WTC11 (cell line): ENCODE measurements at regions of chr1 and their contacts with region 1.

Region 1: GRCh38 chr1:24847995-24848881 is 81.8 kb downstream of the RUNX3 start:
- DNase-seq: peak; percentile 97
- ATAC-seq: peak; percentile 88
- H3K4me3 Mint-ChIP-seq: peak overlapping the region; percentile 67
- H3K27ac Mint-ChIP-seq: no peak overlapping the region
- H3K4me1 Mint-ChIP-seq: 0 out of 2 replicates have a peak, but pooled peaks cover 3% of the 10 kb centered on the region
- H3K27me3 Mint-ChIP-seq: peaks cover 13% of the 10 kb centered on the region
- CTCF ChIP-seq: peak; percentile 83

Region 2: GRCh38 chr1:24793447-24794131 is 54.6 kb before region 1 on chr1:
- CTCF ChIA-PET with region 1: no interaction called
- POLR2A ChIA-PET with region 1: no interaction called
- DNase-seq: no peak
- ATAC-seq: no peak
- H3K4me3 Mint-ChIP-seq: no peak overlapping the region
- H3K27ac Mint-ChIP-seq: peak overlapping the region; percentile 4
- H3K4me1 Mint-ChIP-seq: peaks cover 17% of the 10 kb centered on the region
- H3K27me3 Mint-ChIP-seq: no peaks in the 10 kb centered on the region
- CTCF ChIP-seq: no peak

Region 3: DNA sequence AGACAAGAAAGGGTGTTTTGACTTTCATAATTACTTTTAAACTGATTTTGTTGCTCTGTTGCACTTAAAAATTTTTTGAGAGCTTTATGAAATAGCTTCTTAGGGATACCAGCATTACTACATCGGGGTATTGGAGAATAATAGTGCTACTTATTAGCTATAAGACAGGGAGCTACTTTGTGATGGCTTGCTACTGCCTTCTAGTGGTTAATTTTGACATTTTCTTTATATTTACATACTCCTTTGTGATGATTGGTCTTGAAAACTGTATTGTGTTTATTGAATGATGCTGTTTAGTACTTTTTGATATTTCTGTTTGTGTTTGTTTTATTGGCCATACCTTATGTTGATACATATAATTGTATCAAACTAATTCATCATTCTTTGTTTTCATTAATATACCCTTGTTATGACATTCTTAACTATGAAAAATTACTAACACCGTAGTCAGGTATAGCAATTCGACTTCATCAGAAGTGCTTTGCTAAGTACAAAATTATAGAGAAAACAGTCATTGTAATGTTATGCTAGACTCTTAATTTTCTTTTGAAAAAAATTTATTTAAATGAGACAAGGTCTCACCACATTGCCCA is 17.5 kb before region 1 on chr1:
- CTCF ChIA-PET with region 1: interaction called, 15 read pairs
- POLR2A ChIA-PET with region 1: no interaction called
- DNase-seq: no peak
- ATAC-seq: peak; percentile 57; the same call in 1 of the 2 replicates
- H3K4me3 Mint-ChIP-seq: no peak overlapping the region
- H3K27ac Mint-ChIP-seq: no peak overlapping the region
- H3K4me1 Mint-ChIP-seq: peaks cover 35% of the 10 kb centered on the region
- H3K27me3 Mint-ChIP-seq: no peaks in the 10 kb centered on the region
- CTCF ChIP-seq: peak; percentile 52; the same call in 1 of the 2 replicates

Region 4: GRCh38 chr1:24861821-24862727 is 13.8 kb after region 1 on chr1:
- CTCF ChIA-PET with region 1: interaction called, 31 read pairs
- POLR2A ChIA-PET with region 1: interaction called, 7 read pairs
- DNase-seq: no peak
- ATAC-seq: peak; percentile 29
- H3K4me3 Mint-ChIP-seq: no peak overlapping the region
- H3K27ac Mint-ChIP-seq: peak overlapping the region; percentile 20; the same call in 1 of the 2 replicates
- H3K4me1 Mint-ChIP-seq: peaks cover 15% of the 10 kb centered on the region
- H3K27me3 Mint-ChIP-seq: no peaks in the 10 kb centered on the region
- CTCF ChIP-seq: no peak

Region 5: GRCh38 chr1:24897767-24898483 is 49.7 kb after region 1 on chr1:
- CTCF ChIA-PET with region 1: interaction called, 46 read pairs
- POLR2A ChIA-PET with region 1: no interaction called
- DNase-seq: peak; percentile 79
- ATAC-seq: peak; percentile 93
- H3K4me3 Mint-ChIP-seq: no peak overlapping the region
- H3K27ac Mint-ChIP-seq: no peak overlapping the region
- H3K4me1 Mint-ChIP-seq: peaks cover 7% of the 10 kb centered on the region
- H3K27me3 Mint-ChIP-seq: peaks cover under 1% of the 10 kb centered on the region; the same call in 1 of the 2 replicates
- CTCF ChIP-seq: peak; percentile 71

Region 6: GRCh38 chr1:24909388-24909898 is 61.2 kb after region 1 on chr1:
- CTCF ChIA-PET with region 1: interaction called, 20 read pairs
- POLR2A ChIA-PET with region 1: no interaction called
- DNase-seq: peak; percentile 89
- ATAC-seq: peak; percentile 94
- H3K4me3 Mint-ChIP-seq: peak overlapping the region; percentile 25; the same call in 1 of the 2 replicates
- H3K27ac Mint-ChIP-seq: peak overlapping the region; percentile 81
- H3K4me1 Mint-ChIP-seq: peaks cover 11% of the 10 kb centered on the region
- H3K27me3 Mint-ChIP-seq: no peaks in the 10 kb centered on the region
- CTCF ChIP-seq: 0 out of 2 replicates have a peak, but pooled peaks have one; percentile 18

Region 7: DNA sequence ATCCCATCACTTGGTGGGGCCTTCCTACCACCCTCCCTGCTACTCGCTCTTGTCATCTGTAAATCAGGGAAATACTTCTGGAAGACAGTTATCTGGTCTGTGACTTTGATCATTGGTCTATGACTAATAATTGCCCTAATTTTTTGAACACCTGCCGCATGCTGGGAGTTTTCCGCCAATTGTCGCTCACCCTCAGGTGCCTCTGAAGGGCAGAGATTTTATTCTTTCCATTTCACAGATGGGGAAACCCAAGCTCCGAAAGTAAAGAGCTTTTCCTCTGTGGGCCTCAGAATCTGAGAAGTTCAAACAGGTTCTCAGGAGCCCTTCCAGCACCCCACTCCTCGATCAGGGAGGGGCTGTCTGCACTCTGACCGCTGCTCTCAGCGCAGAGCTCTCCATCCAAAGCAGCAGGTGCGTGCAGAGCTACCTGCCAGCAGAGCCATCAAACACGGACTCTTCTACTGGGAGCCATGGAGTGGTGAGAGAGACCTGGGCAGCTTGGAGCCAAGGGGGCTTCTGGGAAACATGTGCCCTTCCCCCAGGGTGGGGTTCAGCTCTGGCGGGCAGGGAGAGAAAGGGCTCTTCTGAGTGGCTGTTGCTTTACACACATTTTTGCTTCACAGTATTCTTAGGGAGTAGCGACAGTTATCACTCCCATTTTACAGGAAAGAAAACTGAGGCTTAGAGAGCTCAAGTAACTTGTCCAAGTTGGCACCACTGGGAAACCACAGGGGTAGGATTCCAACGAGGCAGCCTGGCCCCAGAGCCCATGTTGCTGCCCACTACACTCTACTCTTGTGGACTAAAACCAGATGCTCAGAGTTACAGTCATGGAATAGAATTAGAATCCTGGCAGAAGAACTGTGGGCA is 87.6 kb after region 1 on chr1:
- CTCF ChIA-PET with region 1: interaction called, 25 read pairs
- POLR2A ChIA-PET with region 1: no interaction called
- DNase-seq: no peak
- ATAC-seq: no peak
- H3K4me3 Mint-ChIP-seq: no peak overlapping the region
- H3K27ac Mint-ChIP-seq: no peak overlapping the region
- H3K4me1 Mint-ChIP-seq: peaks cover 51% of the 10 kb centered on the region
- H3K27me3 Mint-ChIP-seq: peaks cover 53% of the 10 kb centered on the region
- CTCF ChIP-seq: no peak